ENCODE measurements at regions of chr17 and their contacts with region 1.

Region 1: DNA sequence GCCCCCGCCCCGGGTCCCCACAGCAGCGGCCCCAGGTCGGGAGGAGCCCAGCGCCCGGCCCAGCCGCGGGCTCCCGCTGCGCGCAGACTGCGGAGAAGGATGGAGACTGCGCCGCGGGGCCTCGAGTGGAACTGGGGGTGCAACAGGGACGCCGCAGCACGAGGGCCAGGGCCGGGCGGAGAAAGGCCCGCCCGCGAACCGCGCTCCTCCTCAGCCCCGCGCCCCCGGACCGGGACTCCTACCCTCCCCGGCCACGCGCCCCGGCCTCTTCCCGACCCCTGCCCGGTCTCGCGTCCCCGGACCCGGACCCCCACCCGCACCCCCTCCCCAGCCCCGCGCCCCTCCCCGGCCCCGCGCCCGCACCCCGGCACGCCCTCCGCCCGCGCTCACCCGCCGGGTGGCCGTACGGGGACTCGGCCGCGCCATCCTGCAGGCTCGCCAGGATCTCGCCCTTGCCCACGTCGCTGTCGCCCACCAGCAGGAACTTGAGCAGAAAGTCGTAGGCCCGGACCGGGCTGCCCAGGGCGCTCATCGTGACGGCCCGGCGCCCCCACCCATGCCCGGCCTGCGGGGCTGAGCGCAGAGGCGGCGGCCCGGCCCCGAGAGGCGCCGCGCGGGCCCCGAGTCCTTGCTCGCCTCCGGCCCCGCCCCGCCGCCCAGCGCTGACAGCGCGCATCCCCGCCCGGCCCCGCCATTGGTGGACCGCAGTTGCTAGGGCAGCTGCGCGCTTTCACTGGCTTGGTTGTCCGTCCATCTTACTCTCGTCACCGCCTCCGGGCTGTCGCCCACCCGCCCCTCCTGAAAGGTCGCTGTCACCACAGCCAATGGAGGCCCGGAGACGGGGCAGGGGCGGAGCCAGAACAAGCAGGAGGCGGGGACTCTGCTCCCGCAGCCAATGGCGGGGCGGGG is at the start of gene RAB40B:
- DNase-seq: peak; percentile 99
- H3K4me3 Mint-ChIP-seq: peak within 1 kb of the TSS; percentile 84
- H3K27ac Mint-ChIP-seq: no peak within 1 kb of the TSS
- H3K4me1 Mint-ChIP-seq: peaks cover 4% of the 10 kb centered on the region
- H3K27me3 Mint-ChIP-seq: peaks cover 10% of the 10 kb centered on the region
- total RNA-seq, gene RAB40B: 4.9 and 5.4 TPM in 2 replicates

Region 2: DNA sequence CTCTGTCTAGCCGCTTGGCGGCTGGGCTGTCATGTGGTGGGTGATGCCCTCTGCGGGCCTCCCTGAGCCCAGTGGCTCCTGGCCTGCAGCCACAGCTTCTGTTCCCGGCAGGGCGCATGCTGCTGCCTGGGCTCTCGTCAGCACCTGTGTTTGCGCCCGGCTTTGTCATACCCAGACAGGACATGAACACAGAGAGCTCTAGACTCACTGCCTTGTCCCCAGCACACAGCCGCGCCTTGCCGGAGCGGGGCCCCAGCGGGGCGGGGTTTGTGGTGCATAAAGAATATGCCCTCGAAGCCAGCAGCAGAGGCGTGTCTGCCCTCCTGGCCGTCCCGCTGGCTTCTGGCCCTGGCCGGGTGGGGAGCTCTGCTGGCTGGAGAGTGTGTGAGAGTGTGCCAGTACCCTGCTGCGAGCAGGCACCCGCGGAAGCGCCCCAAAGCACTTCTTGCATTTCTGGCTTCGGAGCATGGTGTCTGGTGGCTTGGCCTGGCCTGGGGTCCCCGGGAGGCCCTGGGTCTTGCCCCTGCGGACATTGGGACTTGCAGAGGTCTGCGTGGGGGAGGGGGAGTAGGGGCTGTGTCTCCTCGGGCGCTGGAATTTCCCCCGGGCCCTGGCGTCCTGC is 706.5 kb before region 1 on chr17:
- intact Hi-C with region 1: no loop called
- DNase-seq: no peak
- H3K4me3 Mint-ChIP-seq: no peak overlapping the region
- H3K27ac Mint-ChIP-seq: no peak overlapping the region
- H3K4me1 Mint-ChIP-seq: peaks cover 1% of the 10 kb centered on the region
- H3K27me3 Mint-ChIP-seq: no peaks in the 10 kb centered on the region

Region 3: DNA sequence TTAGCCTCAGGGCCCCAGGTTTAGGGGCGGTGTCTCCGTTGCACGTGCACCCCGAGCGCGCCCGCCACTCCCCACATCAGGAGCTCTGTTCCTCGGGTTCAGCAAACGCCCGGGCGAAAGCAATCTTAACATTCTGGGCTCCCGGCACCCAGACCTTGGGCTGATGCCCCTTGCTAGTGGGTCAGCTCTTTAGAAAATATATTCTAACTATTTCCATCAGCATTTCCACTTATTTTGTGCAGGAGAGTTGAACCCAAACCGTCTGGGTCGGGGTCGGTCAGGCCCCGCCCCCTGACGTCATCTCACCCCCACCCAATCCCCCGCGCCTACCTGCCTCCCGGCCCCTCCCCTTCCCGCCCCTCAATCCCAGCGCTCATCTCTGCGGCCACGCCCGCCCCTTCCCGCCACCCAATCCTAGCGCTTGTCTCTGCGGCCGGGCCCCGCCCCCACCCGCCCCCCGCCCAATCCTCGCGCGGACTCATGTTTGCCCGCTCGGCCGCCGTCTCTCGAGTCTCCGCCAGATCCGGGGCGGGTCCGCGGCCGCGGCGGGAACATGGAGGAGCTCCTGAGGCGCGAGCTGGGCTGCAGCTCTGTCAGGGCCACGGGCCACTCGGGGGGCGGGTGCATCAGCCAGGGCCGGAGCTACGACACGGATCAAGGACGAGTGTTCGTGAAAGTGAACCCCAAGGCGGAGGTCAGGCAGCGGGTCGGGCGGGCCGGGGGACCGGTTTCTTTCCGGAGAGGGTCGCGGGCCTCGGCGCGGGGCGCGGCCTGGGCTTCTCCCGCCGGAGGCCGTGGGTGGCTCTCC is 18.1 kb after region 1 on chr17 and contains the start of gene FN3KRP:
- intact Hi-C with region 1: loop called (anchors 1 kb)
- DNase-seq: peak; percentile 97
- H3K4me3 Mint-ChIP-seq: peak within 1 kb of the TSS; percentile 95
- H3K27ac Mint-ChIP-seq: peak within 1 kb of the TSS; percentile 90
- H3K4me1 Mint-ChIP-seq: peaks cover 19% of the 10 kb centered on the region
- H3K27me3 Mint-ChIP-seq: no peaks in the 10 kb centered on the region
- total RNA-seq, gene FN3KRP: 38.7 and 43.4 TPM in 2 replicates

Region 4: DNA sequence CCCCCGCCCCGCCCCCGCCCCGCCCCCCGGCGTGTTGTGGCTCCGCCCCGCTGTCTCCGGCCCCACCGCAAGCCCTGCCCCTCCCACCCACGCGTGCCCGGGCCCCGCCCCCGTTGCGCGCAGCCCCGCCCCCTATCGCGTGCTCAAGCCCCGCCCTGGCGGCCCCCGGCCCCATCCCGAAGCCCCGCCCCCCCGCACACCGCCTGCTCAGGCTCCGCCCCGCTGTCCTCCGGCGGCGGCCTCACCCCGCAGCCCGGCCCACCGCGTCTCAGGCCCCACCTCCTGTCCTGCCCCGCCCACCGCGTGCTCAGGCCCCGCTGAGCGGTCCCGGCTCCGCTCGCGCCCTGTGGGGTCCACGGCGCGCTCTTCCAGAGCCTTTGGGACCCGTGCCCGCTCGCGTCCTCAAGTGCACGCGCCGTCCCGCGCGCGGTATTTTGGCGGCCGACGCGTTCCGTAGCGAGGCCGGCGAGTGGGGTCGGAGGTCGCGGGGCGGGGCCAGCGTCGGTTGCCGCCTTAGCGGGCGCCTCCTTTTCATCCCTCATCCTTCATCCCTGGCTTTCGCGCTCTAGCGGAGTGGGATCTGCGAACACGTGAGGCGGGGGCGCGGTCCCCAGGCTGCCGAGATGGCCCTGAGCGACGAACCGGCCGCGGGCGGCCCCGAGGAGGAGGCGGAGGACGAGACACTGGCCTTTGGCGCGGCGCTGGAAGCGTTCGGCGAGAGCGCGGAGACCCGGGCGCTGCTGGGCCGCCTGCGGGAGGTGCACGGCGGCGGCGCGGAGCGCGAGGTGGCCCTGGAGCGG is 53.5 kb after region 1 on chr17 and contains the start of gene TBCD:
- intact Hi-C with region 1: loop called (anchors 1 kb)
- DNase-seq: peak; percentile 96
- H3K4me3 Mint-ChIP-seq: peak within 1 kb of the TSS; percentile 93
- H3K27ac Mint-ChIP-seq: peak within 1 kb of the TSS; percentile 87
- H3K4me1 Mint-ChIP-seq: peaks cover 24% of the 10 kb centered on the region
- H3K27me3 Mint-ChIP-seq: no peaks in the 10 kb centered on the region
- total RNA-seq, gene TBCD: 117 and 122 TPM in 2 replicates

Measured in activated CD4-positive, alpha-beta T cell treated with anti-CD3 and anti-CD28 coated beads, Interleukin-2, amount 10 ng/mL, durations not matched to agents 24 days and 14 days (primary cell).